ENCODE measurements at regions of chr14 and their contacts with region 1.

Region 1: DNA sequence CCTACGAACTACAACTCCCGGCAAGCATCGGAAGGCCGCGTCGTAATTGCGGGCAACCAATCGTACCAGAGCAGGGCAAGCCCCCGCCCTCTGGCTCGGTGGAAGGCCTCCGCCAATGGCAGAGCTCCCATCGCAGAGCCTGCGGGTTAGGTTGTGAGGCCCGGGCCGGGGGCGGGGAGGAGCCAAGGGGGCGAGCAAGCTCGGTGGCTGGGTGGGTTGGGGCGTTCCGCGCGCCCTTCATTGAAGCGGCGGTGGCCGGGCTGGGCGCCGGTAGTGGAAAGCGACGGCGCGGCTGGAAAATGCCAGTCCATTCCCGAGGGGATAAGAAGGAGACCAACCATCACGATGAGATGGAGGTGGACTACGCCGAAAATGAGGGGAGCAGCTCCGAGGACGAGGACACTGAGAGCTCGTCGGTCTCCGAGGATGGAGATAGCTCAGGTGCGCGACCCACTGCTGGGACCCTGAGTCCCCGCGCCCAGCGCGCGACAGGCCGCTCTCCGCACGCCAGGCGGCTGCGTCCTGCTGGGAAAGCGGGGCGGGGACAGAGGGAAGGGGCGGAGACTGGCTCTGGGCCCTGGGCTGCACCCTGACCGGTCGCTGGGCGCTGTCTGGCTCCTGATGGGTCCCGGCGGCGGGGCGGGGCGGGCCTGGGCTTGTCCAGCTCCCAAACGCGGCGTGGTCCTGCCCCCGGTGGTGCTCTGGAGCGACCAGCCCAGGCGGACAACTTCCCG is at the start of gene BRMS1L:
- DNase-seq: peak; percentile 98
- H3K4me3 Mint-ChIP-seq: peak within 1 kb of the TSS; percentile 85
- H3K27ac Mint-ChIP-seq: peak within 1 kb of the TSS; percentile 66
- H3K4me1 Mint-ChIP-seq: peaks cover 29% of the 10 kb centered on the region
- H3K27me3 Mint-ChIP-seq: no peaks in the 10 kb centered on the region
- CTCF ChIP-seq: no peak
- total RNA-seq, gene BRMS1L: 7.8 and 10.8 TPM in 2 replicates

Region 2: DNA sequence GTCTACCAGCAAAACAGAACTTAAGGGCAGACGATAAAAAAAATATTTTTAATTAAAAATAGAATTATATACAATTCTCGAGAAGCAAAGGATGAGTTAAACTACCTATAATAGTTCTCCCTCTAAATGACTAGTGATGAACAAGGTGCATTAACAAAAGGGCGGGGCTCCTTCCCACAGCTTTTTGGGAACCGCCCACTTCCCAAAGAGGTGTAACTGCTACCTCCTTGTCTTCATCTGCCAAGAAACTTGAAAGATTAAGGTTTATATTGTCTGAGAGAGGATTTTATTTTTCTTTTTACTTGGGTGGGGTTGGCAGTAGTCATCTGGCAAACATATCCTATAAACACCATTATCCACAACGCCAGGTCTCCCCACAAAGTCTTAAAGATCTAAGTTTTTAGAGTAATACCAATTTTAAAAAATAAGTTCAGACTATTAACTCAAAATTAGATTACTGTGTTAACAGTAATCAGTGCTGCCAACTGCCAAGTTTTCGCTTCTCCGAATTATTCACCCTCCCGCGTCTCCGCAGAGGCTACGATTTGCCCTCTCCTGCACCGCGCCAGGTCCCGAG is 18.2 kb before region 1 on chr14:
- CTCF ChIA-PET with region 1: interaction called, 29 read pairs
- POLR2A ChIA-PET with region 1: interaction called, 33 read pairs
- intact Hi-C with region 1: no loop called
- DNase-seq: peak; percentile 74
- H3K4me3 Mint-ChIP-seq: peak overlapping the region; percentile 95
- H3K27ac Mint-ChIP-seq: peak overlapping the region; percentile 7
- H3K4me1 Mint-ChIP-seq: peaks cover 11% of the 10 kb centered on the region
- H3K27me3 Mint-ChIP-seq: no peaks in the 10 kb centered on the region
- CTCF ChIP-seq: no peak

Region 3: GRCh38 chr14:35814371-35815005 is 11.9 kb before region 1 on chr14:
- CTCF ChIA-PET with region 1: interaction called, 14 read pairs
- POLR2A ChIA-PET with region 1: interaction called, 33 read pairs
- intact Hi-C with region 1: no loop called
- DNase-seq: peak; percentile 82
- H3K4me3 Mint-ChIP-seq: no peak overlapping the region
- H3K27ac Mint-ChIP-seq: no peak overlapping the region
- H3K4me1 Mint-ChIP-seq: peaks cover under 1% of the 10 kb centered on the region
- H3K27me3 Mint-ChIP-seq: no peaks in the 10 kb centered on the region
- CTCF ChIP-seq: peak; percentile 77

Region 4: DNA sequence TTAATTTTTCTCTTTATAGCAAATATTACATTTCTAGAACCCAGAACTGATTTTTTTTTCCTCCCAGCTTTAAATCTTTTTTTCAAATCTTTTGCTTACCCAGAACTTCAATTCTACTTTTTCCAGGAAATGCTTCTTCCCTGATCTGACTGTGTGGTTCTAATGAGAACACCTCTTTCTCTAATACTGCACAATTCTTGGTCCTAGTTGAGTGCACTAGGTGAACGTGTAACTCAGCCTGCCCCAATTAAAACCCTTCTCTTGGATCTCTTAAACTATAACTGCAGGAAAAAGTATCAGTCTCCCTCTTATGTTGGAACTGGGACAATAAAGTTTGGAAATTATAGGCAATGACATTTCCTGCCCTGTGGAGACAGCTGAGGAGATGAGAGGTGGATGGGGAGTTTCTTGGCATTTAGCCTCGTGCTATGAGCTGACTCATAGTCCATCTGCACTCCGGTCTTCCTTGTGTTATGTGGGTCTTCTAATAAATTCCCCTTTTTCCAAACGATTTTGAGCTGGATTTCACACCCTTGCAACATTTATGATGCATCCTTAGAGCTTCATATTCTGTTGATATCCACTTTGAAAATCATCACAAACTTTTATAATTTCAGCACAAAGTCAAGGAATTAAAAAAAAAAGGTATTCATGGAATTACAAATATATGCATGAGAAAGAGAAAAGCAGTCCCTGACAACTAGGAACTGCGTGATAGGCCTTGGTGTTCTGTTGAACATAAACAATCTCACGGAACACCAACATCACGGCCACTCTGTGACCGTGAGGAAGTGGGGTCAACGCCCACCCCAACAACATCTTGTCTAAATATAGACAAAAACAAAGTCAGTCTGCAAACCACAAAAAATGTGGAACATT is 52.1 kb after region 1 on chr14:
- CTCF ChIA-PET with region 1: interaction called, 3 read pairs
- POLR2A ChIA-PET with region 1: interaction called, 19 read pairs
- intact Hi-C with region 1: loop called (anchors 5 kb)
- DNase-seq: peak; percentile 92
- H3K4me3 Mint-ChIP-seq: peak overlapping the region; percentile 54
- H3K27ac Mint-ChIP-seq: peak overlapping the region; percentile 80
- H3K4me1 Mint-ChIP-seq: peaks cover 31% of the 10 kb centered on the region
- H3K27me3 Mint-ChIP-seq: no peaks in the 10 kb centered on the region
- CTCF ChIP-seq: no peak

Region 5: GRCh38 chr14:35883677-35884293 is 57.4 kb after region 1 on chr14:
- CTCF ChIA-PET with region 1: interaction called, 3 read pairs
- POLR2A ChIA-PET with region 1: interaction called, 19 read pairs
- intact Hi-C with region 1: loop called (anchors 5 kb)
- DNase-seq: peak; percentile 41
- H3K4me3 Mint-ChIP-seq: no peak overlapping the region
- H3K27ac Mint-ChIP-seq: no peak overlapping the region
- H3K4me1 Mint-ChIP-seq: peaks cover 14% of the 10 kb centered on the region
- H3K27me3 Mint-ChIP-seq: no peaks in the 10 kb centered on the region
- CTCF ChIP-seq: peak; percentile 66

Region 6: GRCh38 chr14:35909665-35910064 is 83.3 kb after region 1 on chr14:
- CTCF ChIA-PET with region 1: no interaction called
- POLR2A ChIA-PET with region 1: no interaction called
- intact Hi-C with region 1: no loop called
- DNase-seq: no peak
- H3K4me3 Mint-ChIP-seq: no peak overlapping the region
- H3K27ac Mint-ChIP-seq: no peak overlapping the region
- H3K4me1 Mint-ChIP-seq: no peaks in the 10 kb centered on the region
- H3K27me3 Mint-ChIP-seq: no peaks in the 10 kb centered on the region
- CTCF ChIP-seq: no peak

Measured in MCF 10A (cell line).